Left cardiac atrium (tissue), 4 donors: ENCODE measurements at regions of chr7 and their contacts with region 1.

Region 1: GRCh38 chr7:79842682-79843081 is 291.9 kb upstream of the GNAI1 start:
- DNase-seq: no peak
- ATAC-seq: no peak

Region 2: GRCh38 chr7:79876848-79877252 is 34.2 kb after region 1 on chr7:
- intact Hi-C with region 1: loop called in 1 of 2 experiments (anchors 2 kb)
- DNase-seq: no peak
- ATAC-seq: no peak

Region 3: DNA sequence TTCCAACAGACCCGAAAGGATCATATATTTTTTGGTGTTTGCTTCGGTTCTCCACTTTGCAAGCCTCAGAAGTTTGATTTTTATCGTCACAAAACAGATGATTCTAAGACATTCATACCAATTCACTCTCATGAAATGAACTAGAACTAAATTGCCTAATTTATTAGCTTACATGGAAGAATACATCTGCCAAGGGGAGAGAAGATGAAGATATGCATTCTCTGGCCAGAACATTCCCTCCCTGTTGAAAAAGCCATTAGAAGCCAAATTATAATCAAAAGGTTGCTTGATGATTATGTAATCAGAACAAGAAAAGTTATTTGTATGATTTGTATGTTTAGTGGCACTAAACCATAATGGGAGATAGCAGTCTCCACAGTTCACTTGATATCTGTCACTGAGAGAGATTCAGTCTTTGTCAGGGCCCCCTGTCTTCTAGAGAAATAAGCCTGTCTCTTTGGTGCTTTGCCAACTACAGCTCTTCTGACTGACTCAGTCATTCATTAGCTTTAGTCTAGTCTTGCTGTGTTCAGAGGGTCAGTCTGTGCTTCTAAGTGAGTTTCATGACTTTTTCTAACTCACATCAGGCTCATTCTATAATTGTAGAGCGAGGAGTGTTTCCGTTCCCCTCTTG is 196.7 kb after region 1 on chr7:
- intact Hi-C with region 1: no loop called
- DNase-seq: no peak
- ATAC-seq: peak in 1 of 2 donors; percentile 54